Activated B cell treated with CpG ODN at 0.5 μM for 24 hours (primary cell): ENCODE measurements at regions of chr7 and their contacts with region 1.

Region 1: DNA sequence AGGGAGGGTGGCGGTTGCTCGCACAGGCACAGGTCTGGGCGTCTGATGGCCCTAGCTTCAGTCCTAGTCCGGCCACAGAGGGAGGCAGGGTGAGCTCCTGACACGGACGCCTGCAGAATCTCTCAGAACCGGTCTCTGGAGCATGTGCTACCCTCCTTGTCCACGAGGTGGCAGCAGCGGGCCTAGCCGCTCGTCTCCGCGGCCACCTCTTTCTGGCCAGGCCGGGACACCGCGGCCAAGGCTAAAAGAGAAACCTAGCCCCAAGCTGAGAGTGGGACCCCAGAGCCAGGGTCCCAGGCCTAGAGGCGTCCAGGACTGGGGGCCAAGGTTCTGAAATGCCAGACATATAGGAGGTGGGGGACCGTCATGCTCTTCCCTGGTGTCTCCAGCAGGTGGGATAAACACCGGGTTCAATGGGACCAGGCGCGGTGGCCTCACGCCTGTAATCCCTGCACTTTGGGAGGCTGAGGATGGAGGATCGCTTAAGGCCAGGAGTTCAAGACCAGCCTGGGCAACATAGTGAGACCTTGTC is 3.2 kb upstream of the LAT2 start:
- DNase-seq: peak; percentile 88
- ATAC-seq: peak; percentile 41
- H3K4me3 Mint-ChIP-seq: peak overlapping the region; percentile 63
- H3K27ac Mint-ChIP-seq: peak overlapping the region; percentile 50
- H3K4me1 Mint-ChIP-seq: peaks cover 61% of the 10 kb centered on the region
- H3K27me3 Mint-ChIP-seq: no peaks in the 10 kb centered on the region
- CTCF ChIP-seq: peak; percentile 31

Region 2: DNA sequence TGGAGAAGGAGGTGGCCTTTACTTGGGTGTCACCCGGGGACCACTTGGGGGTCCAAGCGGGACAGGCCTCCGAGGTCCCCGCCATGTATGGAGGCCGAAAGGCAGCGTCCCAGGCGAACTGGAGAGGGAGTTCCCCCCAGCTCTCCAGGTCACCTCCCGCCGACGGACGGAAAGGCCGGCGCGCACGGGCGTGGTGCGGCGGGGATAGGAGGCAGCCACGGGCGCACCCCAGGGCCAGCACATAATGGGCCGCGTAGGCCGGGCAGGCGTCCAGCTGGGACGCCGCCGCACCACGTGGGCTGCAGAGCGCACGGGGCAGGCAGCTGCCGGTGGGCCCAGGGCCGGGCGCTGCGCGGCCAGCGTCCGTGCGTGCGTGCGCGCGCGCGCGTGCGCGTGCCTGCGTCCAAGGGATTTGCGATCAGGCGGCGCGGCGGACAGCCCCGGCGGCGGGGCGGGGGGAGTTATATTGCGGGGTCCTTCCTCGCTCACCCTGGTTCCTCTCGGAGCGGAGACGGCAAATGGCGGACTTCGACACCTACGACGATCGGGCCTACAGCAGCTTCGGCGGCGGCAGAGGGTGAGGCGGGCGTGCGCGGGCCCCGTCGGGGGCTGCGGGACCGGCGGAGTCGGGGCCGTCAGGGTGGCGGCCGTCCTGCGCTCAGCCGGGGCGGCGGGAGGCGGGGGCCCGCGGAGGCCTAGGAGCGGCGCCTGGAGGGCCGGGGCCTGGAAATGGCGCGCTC is 32.6 kb before region 1 on chr7 and contains the start of gene EIF4H:
- CTCF ChIA-PET with region 1: interaction called, 9 read pairs
- POLR2A ChIA-PET with region 1: interaction called, 17 read pairs
- intact Hi-C with region 1: loop called (anchors 2 kb)
- DNase-seq: peak; percentile 99
- ATAC-seq: peak; percentile 80
- H3K4me3 Mint-ChIP-seq: peak within 1 kb of the TSS; percentile 91
- H3K27ac Mint-ChIP-seq: peak within 1 kb of the TSS; percentile 89
- H3K4me1 Mint-ChIP-seq: peaks cover 47% of the 10 kb centered on the region
- H3K27me3 Mint-ChIP-seq: no peaks in the 10 kb centered on the region
- CTCF ChIP-seq: no peak
- total RNA-seq, gene EIF4H: 263 and 280 TPM in 2 replicates

Region 3: DNA sequence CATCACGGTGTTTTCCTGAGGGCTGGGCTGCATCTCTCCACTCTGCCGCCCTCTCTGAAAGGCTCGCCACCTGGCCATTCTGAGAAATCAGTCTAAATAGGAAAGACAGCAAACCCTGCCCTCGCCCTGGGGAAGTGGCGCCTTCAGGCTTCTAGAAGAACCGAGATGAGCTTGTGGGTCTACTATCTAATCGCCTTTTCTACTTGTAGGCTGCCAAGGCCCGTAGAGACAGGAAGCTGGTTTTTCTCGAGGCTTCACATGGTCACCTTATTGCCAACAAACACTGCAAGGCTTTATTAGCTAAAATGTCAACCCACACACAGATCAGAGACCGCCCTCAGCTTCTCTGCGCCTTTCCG is 24.6 kb after region 1 on chr7:
- CTCF ChIA-PET with region 1: interaction called, 8 read pairs
- POLR2A ChIA-PET with region 1: interaction called, 142 read pairs
- intact Hi-C with region 1: loop called (anchors 1 kb)
- DNase-seq: peak; percentile 63
- ATAC-seq: peak; percentile 85
- H3K4me3 Mint-ChIP-seq: peak overlapping the region; percentile 55
- H3K27ac Mint-ChIP-seq: peak overlapping the region; percentile 92
- H3K4me1 Mint-ChIP-seq: peaks cover 68% of the 10 kb centered on the region
- H3K27me3 Mint-ChIP-seq: no peaks in the 10 kb centered on the region
- CTCF ChIP-seq: no peak

Region 4: DNA sequence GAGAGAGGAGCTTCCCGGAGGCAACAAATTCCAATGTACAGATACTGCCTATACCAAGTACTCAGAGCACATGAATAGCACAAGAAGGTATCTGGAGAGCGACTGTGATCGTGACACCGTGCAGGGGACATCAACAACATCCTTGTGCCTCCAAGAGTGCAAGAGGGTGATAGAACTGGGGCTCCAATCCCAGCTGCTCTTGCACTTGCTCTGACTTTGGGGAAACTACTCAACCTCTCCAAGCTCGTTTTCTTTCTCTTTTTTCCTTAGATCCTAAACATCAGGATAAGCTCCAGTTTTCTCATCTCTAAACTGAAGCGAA is 35.4 kb after region 1 on chr7:
- CTCF ChIA-PET with region 1: interaction called, 16 read pairs
- POLR2A ChIA-PET with region 1: interaction called, 15 read pairs
- intact Hi-C with region 1: loop called (anchors 1 kb)
- DNase-seq: no peak
- ATAC-seq: peak; percentile 30
- H3K4me3 Mint-ChIP-seq: peak overlapping the region; percentile 74
- H3K27ac Mint-ChIP-seq: peak overlapping the region; percentile 81
- H3K4me1 Mint-ChIP-seq: peaks cover 32% of the 10 kb centered on the region
- H3K27me3 Mint-ChIP-seq: no peaks in the 10 kb centered on the region
- CTCF ChIP-seq: no peak

Region 5: GRCh38 chr7:74272305-74273038 is 65.8 kb after region 1 on chr7:
- CTCF ChIA-PET with region 1: interaction called, 19 read pairs
- POLR2A ChIA-PET with region 1: interaction called, 49 read pairs
- intact Hi-C with region 1: loop called (anchors 1 kb)
- DNase-seq: peak; percentile 71
- ATAC-seq: peak; percentile 81
- H3K4me3 Mint-ChIP-seq: peak overlapping the region; percentile 70
- H3K27ac Mint-ChIP-seq: peak overlapping the region; percentile 80
- H3K4me1 Mint-ChIP-seq: peaks cover 55% of the 10 kb centered on the region
- H3K27me3 Mint-ChIP-seq: no peaks in the 10 kb centered on the region
- CTCF ChIP-seq: no peak

Region 6: DNA sequence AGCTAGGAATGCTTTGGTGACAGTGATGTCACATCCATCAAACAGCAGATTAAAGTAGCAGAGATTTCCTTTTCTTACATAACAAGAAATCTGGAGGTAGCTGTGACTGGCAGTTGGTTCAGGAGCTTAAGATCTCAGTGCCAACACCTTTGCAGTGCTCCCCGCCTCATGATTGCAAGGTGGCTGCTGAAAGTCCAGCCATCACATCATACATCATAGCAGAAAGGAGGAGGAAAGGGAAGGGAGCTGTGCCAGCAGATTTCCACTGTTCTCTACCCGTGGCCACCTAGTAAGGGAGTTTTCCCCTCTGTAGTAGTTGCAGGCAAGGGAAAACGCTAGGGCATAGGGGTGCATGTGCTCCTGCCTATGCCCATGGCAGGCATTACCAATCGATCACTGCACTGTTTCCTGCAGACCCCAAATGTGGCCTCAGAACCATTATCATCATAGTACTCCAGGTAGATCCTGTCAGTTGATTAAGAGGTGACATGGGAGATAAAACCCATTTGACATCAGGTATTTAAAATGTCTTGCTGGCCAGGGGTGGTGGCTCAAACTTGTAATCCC is 189.2 kb after region 1 on chr7:
- CTCF ChIA-PET with region 1: interaction called, 133 read pairs
- POLR2A ChIA-PET with region 1: interaction called, 15 read pairs
- intact Hi-C with region 1: loop called (anchors 1 kb)
- DNase-seq: no peak
- ATAC-seq: no peak
- H3K4me3 Mint-ChIP-seq: no peak overlapping the region
- H3K27ac Mint-ChIP-seq: no peak overlapping the region
- H3K4me1 Mint-ChIP-seq: no peaks in the 10 kb centered on the region
- H3K27me3 Mint-ChIP-seq: no peaks in the 10 kb centered on the region
- CTCF ChIP-seq: no peak

Region 7: DNA sequence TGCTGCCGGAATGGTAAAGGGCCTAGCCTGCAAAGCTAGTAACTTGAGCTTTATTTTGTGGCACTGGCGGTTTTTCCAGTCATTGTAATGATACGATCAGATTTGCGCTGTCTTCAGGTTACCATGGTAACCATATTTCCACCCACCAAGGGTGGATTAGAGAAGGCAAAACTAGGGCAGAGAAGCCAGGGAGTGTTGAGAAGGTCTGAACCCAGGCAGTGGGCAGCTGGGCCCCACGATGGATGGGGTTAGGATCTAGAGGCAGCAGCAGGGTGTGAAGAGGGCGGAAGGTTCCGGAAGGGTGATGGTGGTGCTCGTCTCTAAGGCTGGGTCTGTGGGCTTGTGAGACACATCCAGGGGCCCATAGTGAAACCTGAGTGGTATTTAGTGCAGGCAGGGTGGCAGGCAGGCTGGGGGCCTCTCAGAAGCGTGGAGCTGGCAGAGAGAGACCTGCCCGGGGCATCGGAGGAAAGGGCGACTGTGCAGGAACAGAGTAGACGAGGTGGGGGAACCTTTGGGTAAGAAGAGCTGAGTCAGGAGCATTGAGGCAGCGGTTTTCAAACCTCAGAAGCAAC is 362.9 kb after region 1 on chr7:
- CTCF ChIA-PET with region 1: interaction called, 4 read pairs
- POLR2A ChIA-PET with region 1: no interaction called
- intact Hi-C with region 1: loop called (anchors 1 kb)
- DNase-seq: no peak
- ATAC-seq: no peak
- H3K4me3 Mint-ChIP-seq: no peak overlapping the region
- H3K27ac Mint-ChIP-seq: no peak overlapping the region
- H3K4me1 Mint-ChIP-seq: peaks cover 3% of the 10 kb centered on the region
- H3K27me3 Mint-ChIP-seq: peaks cover 5% of the 10 kb centered on the region
- CTCF ChIP-seq: no peak